Activated naive CD4-positive, alpha-beta T cell treated with anti-CD3 and anti-CD28 coated beads for 36 hours (primary cell): ENCODE measurements at regions of chr3 and their contacts with region 1.

Region 1: DNA sequence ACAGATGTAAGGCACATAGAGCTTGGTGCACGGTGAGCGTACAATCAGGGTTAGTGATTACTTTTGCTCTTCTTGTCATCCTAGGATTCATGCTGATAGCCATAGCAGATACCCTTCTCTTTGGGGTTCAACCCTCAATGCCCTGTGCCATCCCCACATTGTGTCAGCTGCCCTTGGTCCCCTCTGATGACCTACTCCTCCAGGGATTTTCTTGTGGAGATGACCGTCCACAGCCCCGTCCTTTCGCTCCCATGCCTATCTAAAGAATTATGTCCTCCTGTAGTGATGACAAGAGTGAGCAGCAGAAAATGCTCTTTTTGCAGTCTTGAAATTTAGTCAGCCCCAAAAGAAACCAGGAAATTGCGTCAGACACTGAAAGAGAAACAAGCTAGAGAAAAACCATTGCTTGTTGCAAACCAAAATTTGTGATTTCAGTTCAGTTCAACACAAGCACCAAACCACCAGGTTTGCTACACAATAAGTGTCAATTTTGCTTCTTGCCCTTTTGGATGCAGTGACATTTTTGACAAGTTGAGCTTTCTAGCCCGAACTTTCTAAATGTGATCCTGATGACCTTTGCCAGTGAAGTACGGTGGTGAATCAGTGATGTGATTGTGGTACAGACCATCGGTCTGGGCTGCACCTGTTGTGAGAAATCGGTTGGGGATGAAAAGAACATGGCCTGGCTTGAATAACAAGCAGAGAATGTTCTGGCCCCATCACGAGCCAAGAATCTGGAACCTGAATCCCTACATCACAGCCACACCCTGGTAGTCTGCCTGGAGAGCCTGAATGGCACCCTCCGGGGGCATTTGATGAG is 41.3 kb downstream of the CMTM7 start:
- DNase-seq: peak; percentile 59
- H3K4me3 Mint-ChIP-seq: peak overlapping the region; percentile 76
- H3K27ac Mint-ChIP-seq: peak overlapping the region; percentile 99
- H3K4me1 Mint-ChIP-seq: peaks cover 84% of the 10 kb centered on the region
- H3K27me3 Mint-ChIP-seq: no peaks in the 10 kb centered on the region

Region 2: GRCh38 chr3:32106280-32106928 is 326.5 kb before region 1 on chr3 and contains the start of gene GPD1L:
- CTCF ChIA-PET with region 1: no interaction called
- intact Hi-C with region 1: no loop called
- DNase-seq: peak; percentile 92
- H3K4me3 Mint-ChIP-seq: peak within 1 kb of the TSS; percentile 96
- H3K27ac Mint-ChIP-seq: peak within 1 kb of the TSS; percentile 46
- H3K4me1 Mint-ChIP-seq: peaks cover 30% of the 10 kb centered on the region
- H3K27me3 Mint-ChIP-seq: no peaks in the 10 kb centered on the region
- total RNA-seq, gene GPD1L: 10.8 to 12.6 TPM

Region 3: DNA sequence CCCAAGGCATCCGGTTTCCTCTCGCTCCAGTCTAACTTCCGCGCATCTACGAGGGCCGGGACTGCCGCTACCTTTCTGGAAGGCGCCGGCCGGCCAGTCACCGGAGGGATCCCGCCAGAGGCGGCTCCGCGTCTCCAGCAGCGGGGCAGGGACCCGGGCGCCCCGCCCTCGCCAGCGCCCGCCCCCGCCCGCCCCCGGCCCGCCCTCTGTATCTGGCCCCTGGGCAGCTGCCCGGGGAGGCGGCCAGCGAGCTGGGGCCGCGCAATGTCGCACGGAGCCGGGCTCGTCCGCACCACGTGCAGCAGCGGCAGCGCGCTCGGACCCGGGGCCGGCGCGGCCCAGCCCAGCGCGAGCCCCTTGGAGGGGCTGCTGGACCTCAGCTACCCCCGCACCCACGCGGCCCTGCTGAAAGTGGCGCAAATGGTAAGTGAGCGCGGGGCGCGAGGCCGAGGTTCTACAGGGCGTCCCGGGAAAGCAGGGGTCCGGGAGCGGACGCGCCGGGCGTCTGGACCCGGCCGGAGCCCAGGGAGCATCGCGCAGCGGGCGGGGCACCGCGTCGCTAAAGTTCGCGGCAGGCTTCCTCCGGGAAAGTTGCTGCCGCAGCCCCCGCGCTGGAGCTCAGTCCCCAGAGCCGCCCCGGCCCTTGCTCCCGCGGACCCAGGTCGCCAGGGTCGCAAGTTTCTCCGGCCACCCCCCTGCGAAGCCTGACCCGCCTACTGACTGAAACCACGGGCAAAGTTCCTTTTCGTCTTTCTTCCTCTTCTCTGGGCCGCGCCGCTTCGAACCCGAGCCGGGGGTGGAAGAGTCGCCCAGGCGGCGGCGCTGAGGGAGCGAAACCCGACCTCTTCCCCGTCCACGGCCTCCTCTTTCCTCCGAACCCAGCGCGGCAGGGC is 41.0 kb before region 1 on chr3 and contains the start of gene CMTM7:
- CTCF ChIA-PET with region 1: interaction called, 4 read pairs
- intact Hi-C with region 1: loop called (anchors 1 kb)
- DNase-seq: peak; percentile 82
- H3K4me3 Mint-ChIP-seq: peak within 1 kb of the TSS; percentile 95
- H3K27ac Mint-ChIP-seq: peak within 1 kb of the TSS; percentile 93
- H3K4me1 Mint-ChIP-seq: peaks cover 54% of the 10 kb centered on the region
- H3K27me3 Mint-ChIP-seq: no peaks in the 10 kb centered on the region
- total RNA-seq, gene CMTM7: 59.1 to 60.2 TPM

Region 4: GRCh38 chr3:32414520-32415202 is 18.3 kb before region 1 on chr3:
- CTCF ChIA-PET with region 1: interaction called, 11 read pairs
- intact Hi-C with region 1: loop called (anchors 1 kb)
- DNase-seq: peak; percentile 78
- H3K4me3 Mint-ChIP-seq: peak overlapping the region; percentile 40
- H3K27ac Mint-ChIP-seq: peak overlapping the region; percentile 94
- H3K4me1 Mint-ChIP-seq: peaks cover 81% of the 10 kb centered on the region
- H3K27me3 Mint-ChIP-seq: no peaks in the 10 kb centered on the region

Region 5: DNA sequence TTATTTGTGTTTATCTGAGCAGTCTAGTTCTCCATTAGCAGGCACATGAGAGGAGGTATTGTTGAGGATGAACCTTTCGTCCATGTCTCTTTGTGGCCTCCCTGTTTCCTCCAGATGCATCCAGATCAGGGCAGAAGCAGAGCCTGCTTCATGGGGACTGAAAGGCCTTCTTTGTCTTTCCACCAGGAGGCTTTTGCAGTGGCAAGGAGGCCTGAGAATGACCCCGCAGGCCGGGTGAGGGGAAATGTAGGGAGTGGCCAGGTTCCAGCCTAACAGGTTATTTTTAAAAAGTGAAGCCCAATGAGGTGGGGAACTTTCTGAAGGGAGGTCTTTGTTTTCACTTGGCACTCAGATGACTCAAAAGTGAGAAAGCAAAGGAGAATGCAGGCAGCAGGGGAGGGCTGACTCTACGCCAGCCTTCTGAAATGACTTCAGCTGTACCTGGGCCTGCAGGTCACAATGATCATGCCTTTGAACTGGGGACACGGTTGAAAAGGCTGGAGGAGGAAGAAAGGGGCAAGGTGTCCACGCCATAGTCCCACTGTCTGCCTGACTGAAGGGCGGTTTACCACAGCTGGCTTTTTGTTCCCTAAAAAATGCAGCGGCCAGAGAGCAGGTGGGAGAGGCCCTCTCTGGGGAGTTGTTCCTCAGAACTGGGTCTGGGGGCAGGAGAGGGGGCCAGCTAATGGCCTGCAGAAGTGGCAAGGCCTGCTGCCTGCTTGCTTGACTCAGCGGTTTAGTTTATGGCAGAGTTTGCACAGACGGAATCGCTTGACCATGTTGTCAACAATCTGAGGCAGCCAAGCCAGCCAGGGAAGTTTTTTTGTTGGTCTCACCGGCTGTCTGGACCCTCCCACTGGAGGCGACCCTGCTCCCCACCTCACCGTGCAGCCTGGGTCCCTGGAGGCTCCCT is 12.5 kb before region 1 on chr3:
- CTCF ChIA-PET with region 1: interaction called, 11 read pairs
- intact Hi-C with region 1: loop called (anchors 1 kb)
- DNase-seq: peak; percentile 81
- H3K4me3 Mint-ChIP-seq: peak overlapping the region; percentile 66
- H3K27ac Mint-ChIP-seq: peak overlapping the region; percentile 94
- H3K4me1 Mint-ChIP-seq: peaks cover 92% of the 10 kb centered on the region
- H3K27me3 Mint-ChIP-seq: no peaks in the 10 kb centered on the region

Region 6: GRCh38 chr3:32510075-32510724 is 77.3 kb after region 1 on chr3:
- CTCF ChIA-PET with region 1: no interaction called
- intact Hi-C with region 1: no loop called
- DNase-seq: peak; percentile 86
- H3K4me3 Mint-ChIP-seq: no peak overlapping the region
- H3K27ac Mint-ChIP-seq: no peak overlapping the region
- H3K4me1 Mint-ChIP-seq: peaks cover 2% of the 10 kb centered on the region
- H3K27me3 Mint-ChIP-seq: no peaks in the 10 kb centered on the region